OCI-LY7 (cell line): ENCODE measurements at regions of chr11 and their contacts with region 1.

Region 1: GRCh38 chr11:26960281-26960680 is 33.6 kb upstream of the FIBIN start:
- DNase-seq: no peak
- H3K4me3 ChIP-seq: no peak overlapping the region
- H3K27ac ChIP-seq: no peak overlapping the region
- H3K4me1 ChIP-seq: peaks cover 11% of the 10 kb centered on the region
- CTCF ChIP-seq: no peak

Region 2: DNA sequence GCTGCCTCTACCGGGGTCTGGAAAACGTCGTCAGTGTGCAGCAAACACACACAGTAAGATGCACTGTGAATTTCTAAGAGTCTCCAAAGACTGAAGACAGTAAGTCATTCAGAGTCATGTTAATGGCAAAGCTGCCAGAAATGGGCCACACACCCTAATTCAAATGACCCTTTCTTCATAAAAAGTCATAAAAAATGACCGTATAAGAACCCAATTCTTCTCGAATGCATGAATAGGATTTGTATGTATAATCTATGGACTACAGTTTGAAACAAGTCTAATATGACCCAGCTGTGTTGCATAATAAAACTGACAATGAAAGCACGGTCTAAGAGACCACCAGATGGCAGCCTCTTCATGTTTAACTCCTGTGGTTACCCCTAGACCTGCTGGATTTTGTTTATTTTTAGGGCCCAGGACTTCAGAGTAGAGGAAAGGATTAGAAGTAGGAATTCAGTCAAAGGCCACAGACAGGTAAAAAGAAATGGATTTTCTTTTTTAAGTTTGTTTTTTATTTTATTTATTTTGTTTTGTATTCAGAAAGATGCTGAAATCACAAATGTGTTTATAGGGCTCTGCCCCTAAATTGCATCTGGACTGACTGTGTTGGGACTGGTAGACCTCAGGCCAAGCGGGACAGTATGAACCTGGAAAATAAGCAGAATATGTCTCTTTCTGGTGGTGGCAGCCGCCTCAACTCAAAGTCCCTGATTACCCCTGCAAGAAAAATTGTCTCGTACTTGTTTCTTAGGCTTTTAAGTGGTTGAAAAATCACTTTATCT is 206.4 kb before region 1 on chr11:
- CTCF ChIA-PET with region 1: no interaction called
- POLR2A ChIA-PET with region 1: no interaction called
- intact Hi-C with region 1: no loop called
- DNase-seq: peak; percentile 75
- H3K4me3 ChIP-seq: no peak overlapping the region
- H3K27ac ChIP-seq: no peak overlapping the region
- H3K4me1 ChIP-seq: no peaks in the 10 kb centered on the region
- CTCF ChIP-seq: peak; percentile 97

Region 3: GRCh38 chr11:26867286-26867685 is 93.0 kb before region 1 on chr11:
- CTCF ChIA-PET with region 1: no interaction called
- POLR2A ChIA-PET with region 1: interaction called, 12 read pairs
- intact Hi-C with region 1: no loop called
- DNase-seq: no peak
- H3K4me3 ChIP-seq: no peak overlapping the region
- H3K27ac ChIP-seq: no peak overlapping the region
- H3K4me1 ChIP-seq: no peaks in the 10 kb centered on the region
- CTCF ChIP-seq: no peak

Region 4: GRCh38 chr11:26891501-26891900 is 68.8 kb before region 1 on chr11:
- CTCF ChIA-PET with region 1: no interaction called
- POLR2A ChIA-PET with region 1: no interaction called
- intact Hi-C with region 1: no loop called
- DNase-seq: no peak
- H3K4me3 ChIP-seq: no peak overlapping the region
- H3K27ac ChIP-seq: no peak overlapping the region
- H3K4me1 ChIP-seq: peaks cover 9% of the 10 kb centered on the region
- CTCF ChIP-seq: no peak

Region 5: DNA sequence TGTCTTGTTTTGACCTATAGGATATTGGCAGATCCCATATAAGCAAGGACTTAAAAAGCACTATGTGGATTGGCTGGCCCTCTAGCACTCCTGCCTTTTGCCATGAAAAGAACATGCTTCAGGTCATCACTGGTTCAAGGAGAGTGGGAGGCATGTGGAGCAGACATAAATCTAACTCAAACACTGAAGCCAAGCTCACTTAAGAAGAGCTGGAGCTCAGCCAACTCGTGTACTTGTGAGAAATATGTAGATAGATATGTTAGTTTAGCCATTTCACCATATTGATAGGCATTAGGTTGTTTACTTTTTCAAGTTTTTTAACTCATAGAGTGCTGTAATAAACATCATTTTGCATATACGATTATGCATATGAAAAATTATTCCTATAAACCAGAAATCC is 60.5 kb after region 1 on chr11:
- CTCF ChIA-PET with region 1: no interaction called
- POLR2A ChIA-PET with region 1: no interaction called
- intact Hi-C with region 1: no loop called
- DNase-seq: no peak
- H3K4me3 ChIP-seq: no peak overlapping the region
- H3K27ac ChIP-seq: no peak overlapping the region
- H3K4me1 ChIP-seq: no peaks in the 10 kb centered on the region
- CTCF ChIP-seq: no peak